Vagina (tissue), 2 donors: ENCODE measurements at regions of chr22 and their contacts with region 1.

Region 1: GRCh38 chr22:47337161-47337621 is 574.7 kb downstream of the TBC1D22A start:
- DNase-seq: peak in 1 of 2 donors; percentile 75
- H3K4me3 ChIP-seq: peak overlapping the region in 1 of 2 donors; percentile 27
- H3K27ac ChIP-seq: no peak overlapping the region
- H3K4me1 ChIP-seq: no peaks in the 10 kb centered on the region
- H3K27me3 ChIP-seq: no peaks in the 10 kb centered on the region
- CTCF ChIP-seq: no peak
- POLR2A ChIP-seq: no peak

Region 2: DNA sequence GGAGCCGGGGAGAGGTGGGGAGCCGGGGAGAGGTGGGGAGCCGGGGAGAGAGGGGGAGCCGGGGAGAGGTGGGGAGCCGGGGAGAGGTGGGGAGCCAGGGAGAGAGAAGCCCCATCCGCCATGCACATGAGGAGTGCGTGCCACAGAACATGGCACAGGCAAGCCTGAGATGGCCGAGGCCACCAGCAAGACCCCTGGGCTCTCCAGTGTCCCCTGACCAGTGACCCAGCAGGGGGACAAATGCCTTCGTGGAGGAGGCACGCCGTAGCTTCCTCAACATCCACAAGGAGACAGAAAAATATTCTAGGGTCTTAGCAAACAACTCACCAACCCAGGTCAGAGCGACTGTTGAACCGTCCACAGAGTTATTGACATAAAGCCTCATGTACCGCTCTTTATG is 44.0 kb after region 1 on chr22:
- intact Hi-C with region 1: loop called (anchors 2 kb)
- DNase-seq: no peak
- H3K4me3 ChIP-seq: no peak overlapping the region
- H3K27ac ChIP-seq: no peak overlapping the region
- H3K4me1 ChIP-seq: no peaks in the 10 kb centered on the region
- H3K27me3 ChIP-seq: no peaks in the 10 kb centered on the region
- CTCF ChIP-seq: no peak
- POLR2A ChIP-seq: no peak